Naive thymus-derived CD4-positive, alpha-beta T cell (primary cell): ENCODE measurements at regions of chr16 and their contacts with region 1.

Region 1: DNA sequence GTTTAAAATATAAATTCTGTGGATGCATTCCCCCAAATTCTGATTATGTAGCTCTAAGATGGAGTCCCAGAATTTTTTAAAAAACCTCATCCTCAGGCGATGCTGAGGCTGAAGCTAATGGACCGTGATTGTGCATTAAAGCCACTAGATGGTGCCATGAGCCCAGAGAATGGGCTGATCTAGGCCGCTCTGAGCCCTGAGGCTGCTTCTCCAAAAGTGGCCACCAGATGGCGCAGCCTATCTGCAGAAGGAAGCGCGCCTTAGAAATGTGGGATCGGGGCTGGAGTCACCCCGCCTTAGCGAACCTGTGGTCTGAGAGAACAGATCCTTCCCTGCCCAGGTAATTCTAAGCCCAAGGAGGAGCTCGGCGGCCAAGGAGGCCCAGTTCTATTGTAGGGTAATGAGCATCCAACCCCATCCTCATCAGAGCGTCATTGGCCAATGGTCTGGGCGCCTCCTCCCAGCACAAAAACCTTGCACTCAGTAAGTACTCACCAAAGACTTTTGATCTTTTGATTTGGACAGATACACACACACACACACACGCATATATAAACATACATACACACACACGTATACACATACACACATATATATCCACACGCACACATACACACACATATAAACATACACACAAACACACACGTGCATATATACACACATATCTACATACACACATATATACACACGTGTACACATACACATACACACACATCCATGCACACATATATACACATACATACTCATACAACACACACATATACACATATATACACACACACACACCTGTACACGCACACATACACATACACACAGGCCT is 13.7 kb upstream of the MMP2 start:
- DNase-seq: peak; percentile 54 to 86 (median 69)
- ATAC-seq: peak; percentile 97
- H3K4me3 ChIP-seq: no peak overlapping the region
- H3K4me3 Mint-ChIP-seq: no peak overlapping the region
- H3K27ac ChIP-seq: no peak overlapping the region
- H3K27ac Mint-ChIP-seq: no peak overlapping the region
- H3K4me1 ChIP-seq: no peaks in the 10 kb centered on the region
- H3K4me1 Mint-ChIP-seq: peaks cover 0 to 7% (median 0%) of the 10 kb centered on the region in 7 donors
- H3K27me3 ChIP-seq: no peaks in the 10 kb centered on the region
- H3K27me3 Mint-ChIP-seq: peaks cover 0 to 4% (median 0%) of the 10 kb centered on the region in 5 donors

Region 2: GRCh38 chr16:54780266-54780665 is 685.0 kb before region 1 on chr16:
- CTCF ChIA-PET with region 1: no interaction called
- POLR2A ChIA-PET with region 1: no interaction called
- intact Hi-C with region 1: no loop called
- DNase-seq: no peak
- ATAC-seq: no peak
- H3K4me3 ChIP-seq: no peak overlapping the region
- H3K4me3 Mint-ChIP-seq: no peak overlapping the region
- H3K27ac ChIP-seq: no peak overlapping the region
- H3K27ac Mint-ChIP-seq: no peak overlapping the region
- H3K4me1 ChIP-seq: no peaks in the 10 kb centered on the region
- H3K4me1 Mint-ChIP-seq: no peaks in the 10 kb centered on the region
- H3K27me3 ChIP-seq: no peaks in the 10 kb centered on the region
- H3K27me3 Mint-ChIP-seq: peaks cover 0 to 17% (median 4%) of the 10 kb centered on the region in 5 donors

Region 3: DNA sequence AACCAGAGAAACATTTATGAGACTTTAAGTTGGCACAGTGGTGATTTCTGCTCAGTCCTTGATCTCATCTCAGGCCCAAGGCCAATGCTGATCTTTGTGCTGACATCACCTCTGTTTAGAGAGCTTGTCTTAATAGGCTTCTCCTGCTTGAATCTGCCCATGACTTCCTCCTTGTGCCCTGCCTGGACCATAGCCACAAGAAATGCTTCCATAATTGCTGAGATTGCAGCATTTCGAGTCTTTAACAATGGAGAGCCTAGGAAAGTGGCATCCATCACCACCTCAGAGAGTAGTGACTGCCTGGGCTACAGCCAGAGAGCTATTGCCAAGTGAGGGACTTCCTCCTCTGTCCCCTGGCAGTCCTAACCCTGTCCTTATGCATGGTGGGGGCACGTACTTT is 11.4 kb before region 1 on chr16:
- CTCF ChIA-PET with region 1: interaction called, 11 read pairs
- POLR2A ChIA-PET with region 1: no interaction called
- intact Hi-C with region 1: no loop called
- DNase-seq: no peak
- ATAC-seq: no peak
- H3K4me3 ChIP-seq: no peak overlapping the region
- H3K4me3 Mint-ChIP-seq: no peak overlapping the region
- H3K27ac ChIP-seq: no peak overlapping the region
- H3K27ac Mint-ChIP-seq: no peak overlapping the region
- H3K4me1 ChIP-seq: no peaks in the 10 kb centered on the region
- H3K4me1 Mint-ChIP-seq: no peaks in the 10 kb centered on the region
- H3K27me3 ChIP-seq: no peaks in the 10 kb centered on the region
- H3K27me3 Mint-ChIP-seq: peaks cover 0 to 6% (median 0%) of the 10 kb centered on the region in 5 donors

Region 4: GRCh38 chr16:55543472-55543871 is 78.2 kb after region 1 on chr16:
- CTCF ChIA-PET with region 1: no interaction called
- POLR2A ChIA-PET with region 1: no interaction called
- intact Hi-C with region 1: loop called in 1 of 2 experiments (anchors 1 kb)
- DNase-seq: no peak
- ATAC-seq: no peak
- H3K4me3 ChIP-seq: no peak overlapping the region
- H3K4me3 Mint-ChIP-seq: no peak overlapping the region
- H3K27ac ChIP-seq: no peak overlapping the region
- H3K27ac Mint-ChIP-seq: no peak overlapping the region
- H3K4me1 ChIP-seq: no peaks in the 10 kb centered on the region
- H3K4me1 Mint-ChIP-seq: no peaks in the 10 kb centered on the region
- H3K27me3 ChIP-seq: no peaks in the 10 kb centered on the region
- H3K27me3 Mint-ChIP-seq: peaks cover 0 to 7% (median 4%) of the 10 kb centered on the region in 5 donors

Region 5: DNA sequence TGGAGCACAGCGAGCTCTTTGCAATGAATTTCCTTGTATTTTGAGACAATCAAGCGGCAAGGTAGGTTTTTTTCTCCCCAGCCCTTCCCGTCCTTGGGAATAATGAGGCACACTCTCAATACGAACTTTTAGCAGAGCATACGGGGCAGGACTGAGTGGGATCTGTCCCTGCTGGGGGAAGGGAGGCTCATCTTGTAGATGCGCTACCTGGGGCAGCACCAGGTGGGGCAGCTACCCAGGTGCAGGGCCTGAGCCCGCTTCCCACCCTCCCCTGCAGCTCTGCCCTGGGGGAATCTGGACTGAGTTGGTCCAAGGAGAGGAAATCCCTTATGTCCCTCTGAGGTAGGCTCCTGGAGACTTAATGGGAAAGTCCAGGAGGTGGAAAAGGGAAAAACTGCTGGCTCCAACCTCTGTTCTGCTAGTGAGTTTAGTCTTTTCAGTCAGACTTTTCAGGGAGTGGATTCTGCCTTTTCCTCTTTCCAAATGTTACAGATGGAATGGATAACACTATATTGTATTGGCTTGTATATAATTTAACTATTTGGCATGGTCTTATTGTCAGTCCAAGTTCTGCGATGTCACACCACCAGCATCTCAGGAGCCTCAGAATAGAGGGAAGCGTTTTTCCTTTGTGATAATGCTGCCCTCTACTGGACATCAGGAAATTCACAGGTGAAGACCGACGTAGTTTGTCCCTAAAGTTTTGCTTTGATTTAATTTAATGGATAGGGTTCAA is 377.2 kb after region 1 on chr16:
- CTCF ChIA-PET with region 1: no interaction called
- POLR2A ChIA-PET with region 1: no interaction called
- intact Hi-C with region 1: loop called in 1 of 2 experiments (anchors 1 kb)
- DNase-seq: peak in 5 of 9 donors; percentile 3 to 17 (median 9)
- ATAC-seq: peak; percentile 62
- H3K4me3 ChIP-seq: no peak overlapping the region
- H3K4me3 Mint-ChIP-seq: no peak overlapping the region
- H3K27ac ChIP-seq: no peak overlapping the region
- H3K27ac Mint-ChIP-seq: no peak overlapping the region
- H3K4me1 ChIP-seq: no peaks in the 10 kb centered on the region
- H3K4me1 Mint-ChIP-seq: peaks cover 0 to 1% (median 0%) of the 10 kb centered on the region in 7 donors
- H3K27me3 ChIP-seq: no peaks in the 10 kb centered on the region
- H3K27me3 Mint-ChIP-seq: peaks cover 11 to 46% (median 25%) of the 10 kb centered on the region in 5 donors